ENCODE measurements at regions of chr1 and their contacts with region 1.

Region 1: GRCh38 chr1:226349801-226350518 is 41.0 kb upstream of the LIN9 start:
- DNase-seq: no peak
- ATAC-seq: no peak

Region 2: GRCh38 chr1:226308723-226309315 is 41.1 kb before region 1 on chr1 and contains the start of gene LIN9:
- intact Hi-C with region 1: loop called (anchors 5 kb)
- DNase-seq: peak; percentile 95
- ATAC-seq: peak; percentile 93
- total RNA-seq, gene LIN9: 21.8 TPM

Region 3: DNA sequence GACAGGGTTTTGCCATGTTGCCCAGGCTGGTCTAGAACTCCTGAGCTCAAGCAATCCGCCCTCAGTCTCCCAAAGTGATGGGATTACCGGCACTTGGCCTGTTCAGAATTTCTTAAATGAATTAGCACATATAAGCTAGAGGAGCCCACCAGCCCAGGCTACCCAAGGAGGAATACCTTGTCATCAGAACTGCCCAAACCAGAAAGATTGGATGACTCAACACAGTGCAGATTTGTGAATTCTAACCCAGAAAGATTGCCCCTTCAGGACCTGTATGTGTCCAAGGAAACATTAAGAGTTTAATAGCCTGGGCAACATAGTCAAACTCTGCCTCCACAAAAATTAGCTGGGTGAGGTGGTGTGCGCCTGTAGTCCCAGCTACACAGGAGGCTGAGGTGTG is 27.0 kb before region 1 on chr1:
- intact Hi-C with region 1: no loop called
- DNase-seq: no peak
- ATAC-seq: no peak

Region 4: GRCh38 chr1:226397011-226397926 is 47.3 kb after region 1 on chr1:
- intact Hi-C with region 1: no loop called
- DNase-seq: no peak
- ATAC-seq: peak; percentile 23

Measured in Right ventricle myocardium inferior (tissue), 1 donor.